Common myeloid progenitor, CD34-positive (primary cell): ENCODE measurements at regions of chr20 and their contacts with region 1.

Region 1: GRCh38 chr20:23159256-23159946 is 73.3 kb upstream of the CD93 start:
- DNase-seq: no peak
- H3K4me3 ChIP-seq: no peak overlapping the region
- H3K27ac ChIP-seq: no peak overlapping the region
- H3K4me1 ChIP-seq: peaks cover 9 to 73% (median 41%) of the 10 kb centered on the region in 4 experiments
- H3K27me3 ChIP-seq: no peaks in the 10 kb centered on the region

Region 2: GRCh38 chr20:23178806-23179205 is 19.4 kb after region 1 on chr20:
- CTCF ChIA-PET with region 1: interaction called, 13 read pairs
- POLR2A ChIA-PET with region 1: interaction called, 4 read pairs
- DNase-seq: peak; percentile 49 to 77 (median 69)
- H3K4me3 ChIP-seq: no peak overlapping the region
- H3K27ac ChIP-seq: no peak overlapping the region
- H3K4me1 ChIP-seq: peaks cover 0 to 13% (median 5%) of the 10 kb centered on the region in 4 experiments
- H3K27me3 ChIP-seq: no peaks in the 10 kb centered on the region

Region 3: DNA sequence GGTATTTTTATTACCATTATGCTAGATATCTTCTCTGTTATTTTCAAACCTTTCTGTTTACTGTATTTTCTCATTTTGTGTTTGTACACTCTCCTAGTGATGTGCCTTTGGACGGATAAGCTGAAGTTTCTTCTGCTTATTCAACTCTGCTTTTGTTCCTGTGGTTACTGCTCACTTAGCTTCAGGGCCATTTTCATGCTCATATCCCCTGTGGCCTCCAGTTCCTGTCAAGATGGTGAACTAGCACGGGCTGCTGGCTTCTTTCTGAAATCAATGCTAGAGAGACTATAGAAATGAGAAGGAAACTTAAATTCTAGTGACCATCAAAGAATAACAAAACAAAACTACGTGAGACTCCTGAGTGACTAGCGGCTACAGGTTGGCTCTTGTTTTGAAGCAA is 324.7 kb after region 1 on chr20:
- CTCF ChIA-PET with region 1: no interaction called
- POLR2A ChIA-PET with region 1: no interaction called
- DNase-seq: peak in 2 of 3 donors; percentile 11 to 13
- H3K4me3 ChIP-seq: no peak overlapping the region
- H3K27ac ChIP-seq: no peak overlapping the region
- H3K4me1 ChIP-seq: no peaks in the 10 kb centered on the region
- H3K27me3 ChIP-seq: no peaks in the 10 kb centered on the region